PC-9 (cell line): ENCODE measurements at regions of chr20 and their contacts with region 1.

Region 1: GRCh38 chr20:51695574-51696303 is 72.5 kb downstream of the ATP9A start:
- DNase-seq: peak; percentile 29 to 53
- H3K4me3 ChIP-seq: no peak overlapping the region
- H3K27ac ChIP-seq: no peak overlapping the region; the same call in 1 of the 2 replicates
- H3K4me1 ChIP-seq: peaks cover 23% of the 10 kb centered on the region
- H3K27me3 ChIP-seq: no peaks in the 10 kb centered on the region
- CTCF ChIP-seq: no peak

Region 2: DNA sequence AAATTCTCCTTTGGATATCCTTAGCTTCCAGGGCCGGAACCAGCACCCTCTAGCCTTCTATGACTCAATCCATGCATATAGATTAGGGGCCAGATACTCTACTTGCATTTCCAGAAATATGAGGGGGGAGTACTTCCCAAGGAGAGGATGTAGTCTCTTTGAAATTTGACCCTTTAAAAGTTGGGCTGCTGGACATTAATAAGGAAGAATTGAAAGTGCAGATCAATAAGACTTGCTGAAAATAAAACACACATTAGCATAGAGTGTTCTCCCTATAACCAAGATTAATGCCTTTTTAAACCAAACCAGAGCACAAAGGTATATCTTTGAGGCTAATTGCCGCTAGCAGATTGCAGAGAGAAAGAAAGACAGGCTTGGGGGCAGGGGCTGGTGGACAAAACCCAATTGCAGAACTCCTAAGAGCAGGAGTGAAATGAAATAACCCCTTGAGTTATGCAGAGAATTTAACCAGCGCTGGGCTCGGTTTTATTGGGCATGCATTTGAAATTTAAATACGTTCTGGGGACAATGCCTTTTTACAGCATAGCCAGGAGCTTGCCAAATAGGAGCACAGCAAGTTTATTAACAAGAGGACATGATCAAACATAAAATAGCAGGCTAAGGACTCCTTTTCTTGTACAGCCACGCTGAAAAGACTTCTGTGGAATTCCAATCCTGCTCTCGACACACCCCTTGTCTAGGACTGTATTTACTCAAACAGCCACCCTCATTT is 214.7 kb after region 1 on chr20:
- CTCF ChIA-PET with region 1: interaction called, 16 read pairs
- POLR2A ChIA-PET with region 1: no interaction called
- intact Hi-C with region 1: no loop called
- DNase-seq: peak; percentile 21 to 88
- H3K4me3 ChIP-seq: peak overlapping the region; percentile 39; the same call in 1 of the 2 replicates
- H3K27ac ChIP-seq: peak overlapping the region; percentile 78
- H3K4me1 ChIP-seq: peaks cover 34% of the 10 kb centered on the region
- H3K27me3 ChIP-seq: no peaks in the 10 kb centered on the region
- CTCF ChIP-seq: no peak

Region 3: DNA sequence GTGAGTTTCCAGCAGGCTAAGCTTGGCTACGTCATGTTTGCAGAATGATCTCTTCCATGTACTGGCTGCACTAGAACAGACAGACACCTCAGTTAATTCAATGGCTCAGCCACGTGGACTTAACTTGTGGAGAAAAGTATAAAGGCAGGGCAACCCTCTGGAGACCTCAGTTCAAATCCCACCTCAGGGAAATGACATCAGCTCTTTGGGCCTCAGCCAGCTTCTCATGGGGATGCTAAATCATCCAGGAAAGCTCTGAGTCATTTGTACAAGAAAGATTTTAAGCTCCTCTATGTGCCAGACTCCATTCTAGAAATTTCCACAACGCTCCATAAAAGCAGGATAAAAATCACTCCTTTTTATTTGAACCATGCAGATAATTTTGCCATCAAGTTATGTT is 235.0 kb after region 1 on chr20:
- CTCF ChIA-PET with region 1: no interaction called
- POLR2A ChIA-PET with region 1: no interaction called
- intact Hi-C with region 1: no loop called
- DNase-seq: no peak
- H3K4me3 ChIP-seq: no peak overlapping the region
- H3K27ac ChIP-seq: no peak overlapping the region
- H3K4me1 ChIP-seq: peaks cover 9% of the 10 kb centered on the region
- H3K27me3 ChIP-seq: no peaks in the 10 kb centered on the region
- CTCF ChIP-seq: no peak

Region 4: GRCh38 chr20:52060794-52061714 is 365.3 kb after region 1 on chr20:
- CTCF ChIA-PET with region 1: interaction called, 23 read pairs
- POLR2A ChIA-PET with region 1: no interaction called
- intact Hi-C with region 1: no loop called
- DNase-seq: peak in 1 of 2 experiments; percentile 6
- H3K4me3 ChIP-seq: no peak overlapping the region
- H3K27ac ChIP-seq: no peak overlapping the region
- H3K4me1 ChIP-seq: no peaks in the 10 kb centered on the region
- H3K27me3 ChIP-seq: no peaks in the 10 kb centered on the region
- CTCF ChIP-seq: peak; percentile 51

Region 5: DNA sequence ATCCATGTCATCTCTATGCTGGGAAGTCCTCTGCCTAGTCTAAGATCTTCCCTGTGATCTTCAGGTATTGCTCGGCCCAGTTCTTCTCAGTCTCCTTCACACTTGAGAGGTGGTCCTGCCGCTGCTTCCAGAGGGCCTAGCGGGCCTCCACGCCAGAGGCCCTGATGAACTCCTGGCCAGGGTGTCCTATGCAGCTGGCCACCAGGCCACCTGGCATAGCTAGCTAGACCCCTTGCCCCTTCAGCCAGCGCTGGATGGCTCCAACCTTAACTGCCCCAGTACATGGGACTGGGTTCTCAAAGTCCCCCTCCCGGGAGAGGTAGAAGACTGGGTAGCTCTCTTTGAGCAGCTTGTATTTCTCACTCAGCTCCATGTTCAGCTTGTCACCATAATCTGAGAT is 414.7 kb after region 1 on chr20:
- CTCF ChIA-PET with region 1: interaction called, 11 read pairs
- POLR2A ChIA-PET with region 1: no interaction called
- intact Hi-C with region 1: no loop called
- DNase-seq: no peak
- H3K4me3 ChIP-seq: no peak overlapping the region
- H3K27ac ChIP-seq: no peak overlapping the region
- H3K4me1 ChIP-seq: peaks cover 6% of the 10 kb centered on the region; the same call in 1 of the 2 replicates
- H3K27me3 ChIP-seq: no peaks in the 10 kb centered on the region
- CTCF ChIP-seq: no peak

Region 6: DNA sequence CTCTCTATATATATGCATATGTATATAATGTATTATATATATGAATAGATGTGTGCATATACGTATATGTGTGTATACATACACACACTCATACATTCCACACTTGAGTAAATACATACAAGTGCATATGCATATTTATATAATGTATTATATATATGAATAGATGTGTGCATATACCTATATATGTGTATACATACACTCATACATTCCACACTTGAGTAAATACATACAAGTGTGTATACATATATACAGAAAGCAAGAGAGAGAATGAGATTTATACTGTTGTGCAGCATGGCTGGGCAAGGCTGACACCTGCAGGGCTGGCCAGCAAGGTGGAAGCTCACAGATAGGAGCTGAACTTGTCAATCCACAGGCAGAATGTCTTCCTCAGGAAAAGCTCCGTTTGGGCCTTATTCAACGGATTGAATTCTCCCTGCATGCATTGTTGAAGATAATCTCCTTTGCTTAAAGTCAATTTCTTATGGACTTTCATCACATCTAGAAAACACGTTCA is 1641.1 kb after region 1 on chr20:
- CTCF ChIA-PET with region 1: no interaction called
- POLR2A ChIA-PET with region 1: no interaction called
- intact Hi-C with region 1: no loop called
- DNase-seq: no peak
- H3K4me3 ChIP-seq: no peak overlapping the region
- H3K27ac ChIP-seq: no peak overlapping the region
- H3K4me1 ChIP-seq: no peaks in the 10 kb centered on the region
- H3K27me3 ChIP-seq: peaks cover 47% of the 10 kb centered on the region
- CTCF ChIP-seq: no peak